Left cardiac atrium (tissue), 4 donors: ENCODE measurements at regions of chr15 and their contacts with region 1.

Region 1: GRCh38 chr15:52528991-52529926 is 579 bp upstream of the MYO5A start:
- DNase-seq: peak; percentile 79
- ATAC-seq: peak; percentile 89 to 90

Region 2: DNA sequence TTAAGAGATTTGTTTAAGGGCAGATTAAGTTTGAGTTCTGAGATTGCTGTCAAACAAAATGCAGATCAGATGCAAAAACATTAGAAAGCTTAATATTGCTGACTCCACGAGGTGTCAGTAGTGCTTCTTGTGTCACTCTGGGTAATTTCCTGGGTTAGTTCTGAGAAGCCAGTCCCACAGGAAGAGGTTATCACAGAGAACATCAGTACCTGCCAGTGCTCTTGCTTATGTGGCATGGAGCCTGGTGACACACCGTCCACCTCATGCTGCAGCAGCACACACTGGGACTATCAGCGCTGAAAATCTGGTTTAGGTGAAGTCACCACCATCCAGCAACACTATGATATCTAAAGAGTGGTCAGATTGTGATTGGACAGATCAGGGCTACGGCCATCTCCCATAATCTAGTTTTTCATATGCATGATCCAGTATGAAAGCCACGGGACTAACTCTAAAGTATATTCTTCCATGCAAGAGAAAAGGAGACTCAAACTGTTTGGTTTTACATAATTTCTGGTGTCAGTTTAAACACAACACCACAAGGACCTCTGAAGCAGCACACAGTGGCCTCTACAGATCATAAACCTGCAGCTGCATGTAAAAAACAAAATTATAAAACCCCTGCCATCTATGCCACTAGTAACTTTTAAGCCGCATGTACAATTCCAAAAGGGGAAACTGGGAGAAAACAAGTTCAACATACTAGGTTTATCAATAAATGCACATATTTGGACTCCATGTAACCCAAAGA is 197.6 kb before region 1 on chr15:
- intact Hi-C with region 1: loop called in 1 of 2 experiments (anchors 10 kb)
- DNase-seq: no peak
- ATAC-seq: peak; percentile 60 to 88

Region 3: DNA sequence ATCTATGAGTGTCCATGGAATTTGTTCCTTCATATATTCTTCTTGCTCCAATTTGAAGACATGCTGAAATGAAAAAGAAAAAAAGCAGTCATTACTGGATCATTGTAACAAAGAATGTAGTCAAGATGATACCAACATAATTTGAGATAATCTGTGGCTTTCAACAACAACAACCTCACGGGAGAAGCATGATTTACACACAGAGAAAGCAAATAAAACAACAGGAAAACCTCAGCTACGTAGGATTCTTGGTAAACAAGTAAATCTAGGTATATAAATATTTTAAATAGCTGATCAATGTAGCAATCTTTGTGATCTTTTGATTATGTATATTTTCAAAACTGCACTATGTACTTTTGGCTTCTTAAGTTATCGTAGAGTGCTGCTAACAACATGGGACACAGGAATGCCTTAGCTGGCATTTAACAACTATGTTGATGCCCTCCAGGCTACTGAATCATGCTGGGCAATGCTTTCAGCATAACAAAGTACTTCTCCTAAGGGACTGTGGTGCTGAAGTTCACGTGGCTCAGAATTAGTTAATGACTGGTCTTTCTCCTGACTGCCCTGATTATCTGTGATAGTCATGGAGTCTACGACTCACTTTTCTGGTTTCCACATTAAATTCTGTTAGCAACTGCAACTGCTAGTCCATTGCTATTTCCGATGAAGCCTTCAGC is 137.1 kb before region 1 on chr15:
- intact Hi-C with region 1: loop called in 1 of 2 experiments (anchors 10 kb)
- DNase-seq: no peak
- ATAC-seq: peak in 1 of 2 donors; percentile 38

Region 4: GRCh38 chr15:52509500-52510245 is 19.6 kb before region 1 on chr15:
- intact Hi-C with region 1: no loop called
- DNase-seq: no peak
- ATAC-seq: no peak

Region 5: GRCh38 chr15:52683580-52683979 is 154.3 kb after region 1 on chr15:
- intact Hi-C with region 1: no loop called
- DNase-seq: no peak
- ATAC-seq: no peak

Region 6: GRCh38 chr15:52844823-52845222 is 315.6 kb after region 1 on chr15:
- intact Hi-C with region 1: no loop called
- DNase-seq: no peak
- ATAC-seq: no peak